Upper lobe of right lung (tissue), 1 donor: ENCODE measurements at regions of chr22 and their contacts with region 1.

Region 1: DNA sequence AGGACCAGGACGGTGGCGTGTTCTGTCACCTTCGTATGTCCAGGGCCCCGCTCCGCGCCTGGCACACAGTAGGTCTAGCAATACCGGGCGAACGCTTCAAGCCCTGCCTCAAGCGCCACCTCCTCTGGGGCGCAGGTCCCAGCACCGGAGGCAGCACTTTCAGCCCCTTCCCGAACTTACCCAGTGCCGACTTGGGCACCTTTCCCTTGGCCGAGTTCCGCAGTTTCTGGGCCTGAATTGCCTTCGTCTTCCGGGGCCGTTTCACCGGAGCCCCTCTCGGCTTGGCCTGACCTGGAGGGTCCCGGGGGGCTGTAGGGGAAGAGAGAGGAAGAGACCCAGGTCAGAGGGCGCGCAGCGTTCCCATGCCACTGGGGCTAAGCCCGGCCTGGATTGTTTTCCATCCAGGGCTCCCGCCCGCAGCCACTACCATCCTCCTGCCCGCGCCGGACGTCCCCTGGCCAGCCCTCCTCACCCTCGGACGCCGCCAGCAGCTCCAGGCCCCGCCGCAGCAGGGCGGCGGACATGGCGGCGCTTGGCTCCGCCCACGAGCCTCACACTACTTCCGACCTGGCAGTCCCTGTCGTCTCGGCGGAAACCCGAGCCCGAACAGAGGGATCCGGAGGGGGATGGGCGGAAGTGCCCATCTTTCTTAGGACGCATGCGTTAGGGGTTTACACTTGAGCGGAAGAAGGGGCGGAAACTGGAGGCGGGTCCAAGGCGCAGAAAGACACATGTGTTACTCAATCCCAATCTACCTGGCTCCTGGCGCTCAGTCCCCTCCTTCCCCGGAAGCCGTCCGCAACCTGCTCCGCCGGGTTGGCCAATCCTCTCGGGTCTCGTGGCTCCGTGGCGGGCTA is at the start of gene RPS19BP1:
- DNase-seq: peak; percentile 99
- ATAC-seq: peak; percentile 91
- H3K4me3 ChIP-seq: peak within 1 kb of the TSS; percentile 94
- H3K27ac ChIP-seq: peak within 1 kb of the TSS; percentile 93
- H3K4me1 ChIP-seq: peaks cover 50% of the 10 kb centered on the region
- H3K27me3 ChIP-seq: no peaks in the 10 kb centered on the region
- CTCF ChIP-seq: no peak
- total RNA-seq, gene RPS19BP1: 72.5 TPM

Region 2: DNA sequence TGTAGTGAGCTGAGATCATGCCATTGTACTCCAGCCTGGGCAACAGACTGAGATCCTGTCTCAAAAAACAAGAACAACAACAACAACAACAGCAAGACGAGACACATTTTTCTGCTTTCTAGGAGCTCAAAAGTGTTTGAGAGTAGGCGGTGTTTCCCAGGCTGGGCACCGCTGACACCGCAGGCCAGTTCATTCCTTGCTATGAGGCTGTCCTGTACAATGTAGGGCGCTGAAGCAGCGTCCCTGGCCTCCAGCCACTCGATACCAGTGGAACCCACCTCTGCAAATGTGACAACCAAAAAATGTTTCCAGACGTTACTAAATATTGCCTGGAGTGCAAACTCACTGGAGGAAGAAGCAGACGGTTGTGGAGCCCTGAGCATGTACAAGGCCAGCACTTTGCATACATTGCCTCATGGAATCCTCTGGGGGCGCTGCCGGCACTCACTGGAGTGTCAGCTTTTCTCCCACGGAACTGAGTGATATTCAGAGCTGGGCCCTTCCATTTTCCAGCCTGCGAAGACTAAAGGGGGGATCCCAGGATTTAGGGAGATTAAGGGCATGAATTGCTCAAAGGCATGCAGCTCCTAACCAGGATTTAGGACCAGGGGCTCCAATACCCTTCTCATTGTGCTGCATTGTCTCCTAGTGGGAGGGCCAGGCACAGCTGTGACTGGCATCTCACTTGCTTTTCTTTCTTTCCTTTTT is 36.2 kb before region 1 on chr22:
- intact Hi-C with region 1: loop called (anchors 5 kb)
- DNase-seq: peak; percentile 85
- ATAC-seq: peak; percentile 89
- H3K4me3 ChIP-seq: no peak overlapping the region
- H3K27ac ChIP-seq: no peak overlapping the region
- H3K4me1 ChIP-seq: peaks cover 25% of the 10 kb centered on the region
- H3K27me3 ChIP-seq: no peaks in the 10 kb centered on the region
- CTCF ChIP-seq: peak; percentile 76

Region 3: GRCh38 chr22:39651053-39651996 is 118.9 kb after region 1 on chr22:
- intact Hi-C with region 1: no loop called
- DNase-seq: no peak
- ATAC-seq: peak; percentile 25
- H3K4me3 ChIP-seq: no peak overlapping the region
- H3K27ac ChIP-seq: no peak overlapping the region
- H3K4me1 ChIP-seq: no peaks in the 10 kb centered on the region
- H3K27me3 ChIP-seq: no peaks in the 10 kb centered on the region
- CTCF ChIP-seq: no peak

Region 4: GRCh38 chr22:39845529-39845928 is 313.1 kb after region 1 on chr22:
- intact Hi-C with region 1: no loop called
- DNase-seq: no peak
- ATAC-seq: no peak
- H3K4me3 ChIP-seq: no peak overlapping the region
- H3K27ac ChIP-seq: no peak overlapping the region
- H3K4me1 ChIP-seq: no peaks in the 10 kb centered on the region
- H3K27me3 ChIP-seq: no peaks in the 10 kb centered on the region
- CTCF ChIP-seq: no peak

Region 5: DNA sequence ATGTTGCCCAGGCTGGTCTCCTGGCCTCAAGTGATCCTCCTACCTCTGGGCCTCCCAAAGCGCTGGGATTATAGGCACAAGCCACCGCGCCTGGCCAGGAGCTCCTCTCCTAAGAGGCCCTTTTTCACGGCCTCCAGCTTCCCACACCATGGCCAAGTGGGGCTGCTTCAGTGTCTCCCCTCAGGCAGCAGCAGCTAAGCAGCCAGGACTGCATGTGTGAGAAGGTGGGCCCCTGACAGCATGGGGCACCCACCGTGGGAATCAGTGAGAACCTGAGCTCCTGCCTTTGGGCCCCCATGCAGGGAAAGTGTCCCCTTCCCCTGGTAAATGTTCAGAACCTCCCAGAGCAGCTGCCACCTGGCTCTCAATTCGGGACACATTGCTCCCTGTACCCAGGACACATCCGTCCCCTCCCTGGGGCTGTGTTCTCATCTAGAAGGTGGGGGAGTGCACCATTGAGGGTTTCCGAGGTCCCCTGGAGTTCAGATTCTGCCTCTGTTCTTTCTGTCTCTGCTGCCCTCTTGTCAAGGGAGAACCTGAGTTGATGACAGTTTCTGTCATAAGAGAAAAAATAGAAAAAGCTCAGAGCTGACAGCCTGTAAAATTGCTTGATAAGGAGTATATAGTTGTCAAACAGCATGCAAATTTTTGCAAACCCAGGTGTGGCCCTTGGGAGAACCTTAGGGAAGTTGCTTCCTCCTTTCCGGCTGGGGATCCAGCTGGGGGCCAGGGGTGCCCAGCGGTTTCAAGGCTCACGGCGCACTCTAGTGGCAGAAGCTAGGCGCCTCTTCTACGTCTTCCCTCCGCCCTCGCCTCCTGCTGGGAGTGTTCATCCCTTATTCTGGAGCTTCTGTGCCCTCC is 492.0 kb after region 1 on chr22:
- intact Hi-C with region 1: loop called (anchors 5 kb)
- DNase-seq: peak; percentile 86
- ATAC-seq: peak; percentile 89
- H3K4me3 ChIP-seq: no peak overlapping the region
- H3K27ac ChIP-seq: no peak overlapping the region
- H3K4me1 ChIP-seq: no peaks in the 10 kb centered on the region
- H3K27me3 ChIP-seq: no peaks in the 10 kb centered on the region
- CTCF ChIP-seq: peak; percentile 90